HEK293T (cell line): ENCODE measurements at regions of chr7 and their contacts with region 1.

Region 1: DNA sequence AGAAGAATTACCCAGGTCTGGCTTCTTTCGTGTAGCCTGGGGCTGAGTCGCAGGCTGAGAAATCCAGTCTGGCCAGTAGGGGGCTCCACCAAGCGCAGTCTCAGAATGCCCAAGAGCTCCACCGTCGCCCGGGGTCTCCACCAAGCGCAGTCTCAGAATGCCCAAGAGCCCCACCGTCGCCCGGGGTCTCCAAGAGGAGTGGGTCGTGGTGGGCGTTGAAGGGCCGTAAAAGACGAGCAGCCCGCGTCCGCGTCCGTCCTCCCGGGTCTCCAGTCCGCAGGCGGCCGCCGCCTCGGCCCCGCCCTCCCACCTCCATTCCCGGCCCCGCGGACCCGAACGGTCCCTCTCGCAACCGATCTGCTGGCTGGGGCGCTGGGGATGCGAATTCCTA is 895 bp upstream of the ZYX start:
- DNase-seq: peak; percentile 88

Region 2: DNA sequence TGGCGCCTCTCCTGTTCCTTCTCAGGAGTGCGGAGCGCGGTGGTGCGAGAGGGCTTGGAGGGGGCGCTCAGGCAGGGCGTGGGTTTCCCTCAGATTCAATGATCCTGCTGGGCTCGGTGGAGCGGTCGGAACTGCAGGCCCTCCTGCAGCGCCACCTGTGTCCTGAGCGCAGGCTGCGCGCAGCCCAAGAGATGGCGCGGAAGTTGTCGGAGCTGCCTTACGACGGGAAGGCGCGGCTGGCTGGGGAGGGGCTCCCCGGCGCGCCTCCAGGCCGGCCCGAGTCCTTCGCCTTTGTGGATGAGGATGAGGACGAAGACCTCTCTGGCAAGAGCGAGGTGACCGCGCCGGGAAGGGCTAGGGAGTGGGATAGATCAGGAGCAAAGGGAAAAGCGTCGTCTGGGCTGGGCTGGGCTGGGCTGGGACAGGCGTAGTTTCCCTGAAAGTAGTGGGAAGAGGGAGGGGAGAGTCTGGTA is 34.8 kb before region 1 on chr7:
- CTCF ChIA-PET with region 1: interaction called, 12 read pairs
- POLR2A ChIA-PET with region 1: no interaction called
- DNase-seq: peak; percentile 89

Region 3: GRCh38 chr7:143367972-143368371 is 12.3 kb before region 1 on chr7:
- CTCF ChIA-PET with region 1: interaction called, 14 read pairs
- POLR2A ChIA-PET with region 1: interaction called, 8 read pairs
- DNase-seq: no peak

Region 4: DNA sequence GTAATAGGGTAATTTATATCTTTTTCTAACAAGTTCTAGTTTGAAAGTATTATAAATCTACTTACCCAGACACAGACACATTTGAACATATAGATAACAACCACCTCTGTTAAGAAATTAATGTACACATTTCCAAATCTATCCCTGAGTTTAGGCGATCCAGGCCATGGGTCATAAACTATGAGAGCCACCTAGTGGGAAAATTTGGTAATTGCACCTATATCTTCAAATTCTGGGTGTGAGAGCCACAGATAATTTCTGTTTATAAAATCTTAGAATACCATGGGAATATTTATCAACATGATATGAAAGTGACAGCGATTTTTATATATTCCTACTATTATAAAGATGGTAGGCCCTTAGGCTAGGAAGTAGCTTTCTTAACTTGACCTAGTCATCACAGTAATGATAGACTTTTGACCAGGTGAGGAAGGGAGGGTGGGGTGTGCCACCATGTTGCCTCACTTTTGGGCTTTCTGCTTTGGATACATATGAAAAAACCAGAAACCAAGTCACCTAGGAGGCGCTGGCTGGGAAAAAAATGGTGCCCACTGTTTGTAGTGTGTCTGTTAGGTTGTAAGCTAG is 36.4 kb after region 1 on chr7:
- CTCF ChIA-PET with region 1: interaction called, 12 read pairs
- POLR2A ChIA-PET with region 1: interaction called, 4 read pairs
- DNase-seq: peak; percentile 74